AG04450 (cell line): ENCODE measurements at regions of chr11 and their contacts with region 1.

Region 1: DNA sequence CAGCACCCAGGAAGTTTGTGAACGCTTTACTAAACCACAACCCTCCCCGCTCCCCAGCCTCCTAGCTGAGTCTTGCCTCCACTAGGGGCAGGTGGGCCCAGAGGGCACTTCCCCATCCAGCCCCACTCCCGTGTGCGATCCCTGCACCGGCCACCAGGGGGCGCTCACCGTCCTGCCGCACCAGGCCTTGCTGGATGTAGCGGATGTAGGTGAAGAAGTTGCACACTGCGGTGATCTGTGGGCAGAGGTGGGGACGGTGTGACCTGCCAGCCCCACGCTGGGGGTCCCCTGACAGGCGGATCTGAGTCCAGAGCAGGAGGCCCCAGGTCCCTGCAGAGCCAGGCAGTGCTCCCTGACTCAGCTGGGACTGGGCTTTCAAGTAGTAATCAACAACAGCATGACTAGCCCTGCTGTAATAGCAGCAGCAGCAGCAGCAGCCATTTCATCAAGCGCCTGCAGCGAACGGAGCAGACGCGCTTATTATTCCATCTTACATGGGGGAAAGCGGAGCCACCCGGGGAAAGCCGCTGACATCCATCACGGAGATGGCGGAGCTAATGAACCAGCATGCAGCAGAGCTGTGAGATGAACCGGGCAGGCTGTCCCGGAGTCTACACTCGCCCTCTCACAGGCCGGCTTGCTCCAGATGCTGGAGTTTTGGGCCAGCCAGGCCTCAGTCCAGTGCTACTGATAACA is 7.9 kb upstream of the FADS3 start:
- DNase-seq: no peak
- H3K4me3 ChIP-seq: no peak overlapping the region
- H3K27ac ChIP-seq: no peak overlapping the region
- H3K27me3 ChIP-seq: no peaks in the 10 kb centered on the region
- CTCF ChIP-seq: peak; percentile 99

Region 2: GRCh38 chr11:61452825-61453224 is 446.5 kb before region 1 on chr11:
- CTCF ChIA-PET with region 1: no interaction called
- POLR2A ChIA-PET with region 1: no interaction called
- DNase-seq: no peak
- H3K4me3 ChIP-seq: no peak overlapping the region
- H3K27ac ChIP-seq: no peak overlapping the region
- H3K27me3 ChIP-seq: no peaks in the 10 kb centered on the region
- CTCF ChIP-seq: no peak

Region 3: DNA sequence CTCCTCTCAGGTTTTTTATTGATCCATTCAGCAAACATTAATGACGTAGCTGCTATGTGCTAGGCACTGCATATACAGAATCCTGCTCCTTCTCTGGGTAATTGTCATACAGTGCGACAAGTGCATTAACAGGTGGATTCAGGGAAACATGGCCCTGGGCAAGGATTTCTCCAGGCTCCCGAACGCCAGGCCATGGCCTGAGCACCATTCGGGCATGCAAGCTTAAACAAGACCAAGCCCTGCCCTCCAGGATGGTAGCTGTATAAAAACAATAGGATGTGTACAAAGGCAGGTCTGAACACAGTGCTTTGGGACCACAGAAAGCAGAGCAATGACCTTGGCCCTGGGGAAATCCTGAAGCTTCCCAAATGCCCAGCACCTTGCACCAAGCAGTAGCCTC is 309.3 kb before region 1 on chr11:
- CTCF ChIA-PET with region 1: no interaction called
- POLR2A ChIA-PET with region 1: no interaction called
- DNase-seq: no peak
- H3K4me3 ChIP-seq: no peak overlapping the region
- H3K27ac ChIP-seq: no peak overlapping the region
- H3K27me3 ChIP-seq: peaks cover 70% of the 10 kb centered on the region
- CTCF ChIP-seq: no peak

Region 4: DNA sequence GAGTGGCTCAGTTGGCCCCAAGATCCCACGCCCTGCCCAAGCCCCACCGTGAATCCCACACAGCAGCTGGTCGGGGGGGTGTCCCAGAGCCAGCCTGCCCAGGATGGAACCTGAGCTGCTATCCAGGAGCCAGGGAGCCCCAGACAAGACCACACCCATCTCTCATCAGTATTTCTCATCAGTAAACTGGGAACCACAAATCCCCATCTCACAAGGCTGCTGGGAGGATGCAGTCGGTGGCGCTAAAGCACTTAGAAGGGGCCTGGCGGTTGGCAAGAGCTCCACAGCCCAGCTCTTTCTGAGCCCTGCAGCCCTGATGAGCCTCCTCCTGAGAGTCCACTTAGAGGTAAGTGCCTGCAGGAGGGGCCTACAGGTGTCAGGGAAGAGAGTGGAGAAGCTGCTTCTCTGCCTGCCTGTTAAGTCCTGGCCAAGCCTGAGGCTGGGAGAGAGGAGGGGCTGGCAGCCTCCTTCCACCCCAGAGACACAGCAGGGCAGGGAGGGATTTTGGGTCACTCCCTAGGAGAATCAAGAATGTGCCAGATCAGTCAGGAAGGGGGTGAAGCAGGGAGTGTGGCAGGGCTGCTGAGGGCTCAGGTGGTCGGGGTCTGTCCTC is 14.0 kb before region 1 on chr11:
- CTCF ChIA-PET with region 1: interaction called, 18 read pairs
- POLR2A ChIA-PET with region 1: no interaction called
- DNase-seq: no peak
- H3K4me3 ChIP-seq: no peak overlapping the region
- H3K27ac ChIP-seq: no peak overlapping the region
- H3K27me3 ChIP-seq: no peaks in the 10 kb centered on the region
- CTCF ChIP-seq: no peak

Region 5: GRCh38 chr11:61928606-61929005 is 29.3 kb after region 1 on chr11:
- CTCF ChIA-PET with region 1: interaction called, 48 read pairs
- POLR2A ChIA-PET with region 1: no interaction called
- DNase-seq: no peak
- H3K4me3 ChIP-seq: no peak overlapping the region
- H3K27ac ChIP-seq: no peak overlapping the region
- H3K27me3 ChIP-seq: peaks cover 2% of the 10 kb centered on the region
- CTCF ChIP-seq: no peak

Region 6: DNA sequence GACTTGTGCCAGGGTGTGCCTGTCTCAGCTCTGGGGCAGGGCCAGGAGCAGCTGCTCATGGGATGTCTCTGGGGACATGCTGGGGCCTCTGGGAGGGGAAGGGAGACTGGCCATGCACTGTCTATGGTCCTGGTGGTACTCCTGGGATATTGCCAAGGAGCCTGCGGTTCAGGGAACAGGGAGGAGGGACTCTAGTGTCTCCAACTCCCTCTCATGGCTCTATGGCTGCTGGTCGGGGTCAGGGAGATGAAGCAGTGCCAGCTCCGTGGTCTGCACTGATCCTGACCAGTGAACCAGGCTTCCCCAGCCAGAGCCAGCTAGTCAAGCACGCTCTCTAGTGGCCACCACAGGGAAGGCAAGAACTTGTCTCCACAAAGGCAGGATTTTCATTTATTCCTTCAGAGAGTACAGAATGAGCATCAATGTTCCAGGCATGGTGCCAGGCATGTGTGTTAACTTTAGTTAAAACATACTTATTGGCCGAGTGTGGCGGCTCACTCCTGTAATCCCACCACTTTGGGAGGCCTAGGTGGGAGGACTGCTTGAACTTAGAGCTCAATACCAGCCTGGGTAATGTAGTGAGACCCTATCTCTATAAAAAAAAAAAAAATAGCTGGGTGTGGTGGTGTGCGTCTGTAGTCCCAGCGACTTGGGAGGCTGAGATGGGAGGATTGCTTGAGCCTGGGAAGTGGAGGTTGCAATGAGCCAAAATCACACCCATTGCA is 48.4 kb after region 1 on chr11:
- CTCF ChIA-PET with region 1: interaction called, 345 read pairs
- POLR2A ChIA-PET with region 1: interaction called, 4 read pairs
- DNase-seq: no peak
- H3K4me3 ChIP-seq: no peak overlapping the region
- H3K27ac ChIP-seq: no peak overlapping the region
- H3K27me3 ChIP-seq: peaks cover 13% of the 10 kb centered on the region
- CTCF ChIP-seq: peak; percentile 99

Region 7: GRCh38 chr11:62088331-62088933 is 189.1 kb after region 1 on chr11:
- CTCF ChIA-PET with region 1: interaction called, 175 read pairs
- POLR2A ChIA-PET with region 1: no interaction called
- DNase-seq: no peak
- H3K4me3 ChIP-seq: no peak overlapping the region
- H3K27ac ChIP-seq: no peak overlapping the region
- H3K27me3 ChIP-seq: no peaks in the 10 kb centered on the region
- CTCF ChIP-seq: no peak